Vagina (tissue), 2 donors: ENCODE measurements at regions of chr17 and their contacts with region 1.

Region 1: DNA sequence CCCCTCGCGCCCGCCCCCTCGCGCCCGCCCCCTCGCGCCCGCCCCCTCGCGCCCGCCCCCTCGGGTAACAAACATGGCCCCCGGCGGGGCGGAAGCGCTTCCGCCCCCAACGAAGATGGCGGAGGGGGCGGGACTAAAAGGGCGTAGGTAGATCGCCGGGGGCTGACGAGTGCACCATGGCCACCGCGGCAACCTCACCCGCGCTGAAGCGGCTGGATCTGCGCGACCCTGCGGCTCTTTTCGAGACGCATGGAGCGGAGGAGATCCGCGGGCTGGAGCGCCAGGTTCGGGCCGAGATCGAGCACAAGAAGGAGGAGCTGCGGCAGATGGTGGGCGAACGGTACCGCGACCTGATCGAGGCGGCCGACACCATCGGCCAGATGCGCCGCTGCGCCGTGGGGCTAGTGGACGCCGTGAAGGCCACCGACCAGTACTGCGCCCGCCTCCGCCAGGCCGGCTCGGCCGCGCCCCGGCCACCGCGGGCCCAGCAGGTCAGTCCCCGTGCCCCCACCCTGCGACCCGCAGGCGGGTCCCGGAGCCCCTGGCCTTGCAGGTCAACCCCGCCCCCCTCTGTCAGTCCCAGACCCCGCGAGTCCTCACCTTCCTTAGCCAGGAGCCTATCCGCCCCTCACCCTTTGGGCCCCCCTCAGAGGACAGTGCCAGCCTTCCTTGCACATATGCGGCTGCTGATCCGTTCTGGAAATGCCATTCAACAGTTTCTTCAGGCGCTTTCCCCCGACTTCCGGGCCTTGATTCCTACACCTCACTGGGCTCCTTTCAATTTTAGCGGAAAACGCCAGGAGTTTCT is at the start of gene COG1:
- DNase-seq: no peak
- H3K4me3 ChIP-seq: peak within 1 kb of the TSS; percentile 90 to 96
- H3K27ac ChIP-seq: peak within 1 kb of the TSS; percentile 88
- H3K4me1 ChIP-seq: peaks cover 19% of the 10 kb centered on the region
- H3K27me3 ChIP-seq: no peaks in the 10 kb centered on the region
- CTCF ChIP-seq: no peak
- POLR2A ChIP-seq: peak in 1 of 2 donors; percentile 27
- total RNA-seq, gene COG1: 30.9 TPM

Region 2: DNA sequence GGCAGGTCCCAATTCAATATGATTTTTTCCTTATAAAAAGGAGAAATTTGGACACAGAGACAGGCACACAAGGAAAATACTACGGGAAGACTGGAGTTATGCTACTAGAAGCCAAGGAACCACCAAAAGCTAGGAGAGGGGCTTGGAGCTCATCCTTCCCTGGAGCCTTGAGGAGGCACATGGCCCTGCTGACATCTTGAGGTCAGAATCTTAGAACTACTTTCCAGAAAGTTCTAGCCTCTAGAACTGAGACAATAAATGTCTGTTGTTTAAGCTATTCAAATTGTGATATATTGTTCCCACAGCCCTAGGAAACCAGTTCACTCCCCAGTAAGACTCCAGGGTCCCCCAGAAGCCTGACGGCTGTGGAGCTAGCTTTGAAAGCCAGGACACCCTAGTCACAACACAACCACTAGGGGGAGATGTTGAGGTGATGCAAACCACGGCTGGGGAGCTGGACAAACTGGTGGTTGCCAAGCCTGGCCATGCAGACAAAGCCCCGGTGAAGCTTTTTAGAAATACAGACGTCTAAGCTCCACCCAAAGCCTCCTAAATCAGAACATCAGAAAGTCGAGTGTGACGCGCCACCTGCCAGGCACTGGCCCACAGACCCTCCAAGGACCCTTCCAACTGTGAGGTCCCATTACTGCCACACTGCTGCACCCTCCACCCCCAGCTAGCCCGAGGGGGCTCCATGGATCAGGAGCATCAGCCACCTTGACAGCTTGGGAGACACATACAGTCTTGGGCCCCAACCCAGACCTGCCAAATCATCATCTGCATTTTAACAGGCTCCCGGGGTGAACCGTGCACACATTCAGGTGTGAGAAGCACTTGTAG is 207.0 kb before region 1 on chr17:
- intact Hi-C with region 1: loop called (anchors 1 kb)
- DNase-seq: no peak
- H3K4me3 ChIP-seq: no peak overlapping the region
- H3K27ac ChIP-seq: no peak overlapping the region
- H3K4me1 ChIP-seq: no peaks in the 10 kb centered on the region
- H3K27me3 ChIP-seq: no peaks in the 10 kb centered on the region
- CTCF ChIP-seq: peak; percentile 59 to 63 (median 60)
- POLR2A ChIP-seq: no peak

Region 3: GRCh38 chr17:73231841-73232586 is 38.9 kb after region 1 on chr17:
- intact Hi-C with region 1: loop called (anchors 5 kb)
- DNase-seq: peak in 1 of 2 donors; percentile 92
- H3K4me3 ChIP-seq: peak overlapping the region; percentile 64 to 100
- H3K27ac ChIP-seq: peak overlapping the region; percentile 90
- H3K4me1 ChIP-seq: peaks cover 56% of the 10 kb centered on the region
- H3K27me3 ChIP-seq: no peaks in the 10 kb centered on the region
- CTCF ChIP-seq: peak in 1 of 3 experiments; percentile 31
- POLR2A ChIP-seq: peak; percentile 8 to 54

Region 4: DNA sequence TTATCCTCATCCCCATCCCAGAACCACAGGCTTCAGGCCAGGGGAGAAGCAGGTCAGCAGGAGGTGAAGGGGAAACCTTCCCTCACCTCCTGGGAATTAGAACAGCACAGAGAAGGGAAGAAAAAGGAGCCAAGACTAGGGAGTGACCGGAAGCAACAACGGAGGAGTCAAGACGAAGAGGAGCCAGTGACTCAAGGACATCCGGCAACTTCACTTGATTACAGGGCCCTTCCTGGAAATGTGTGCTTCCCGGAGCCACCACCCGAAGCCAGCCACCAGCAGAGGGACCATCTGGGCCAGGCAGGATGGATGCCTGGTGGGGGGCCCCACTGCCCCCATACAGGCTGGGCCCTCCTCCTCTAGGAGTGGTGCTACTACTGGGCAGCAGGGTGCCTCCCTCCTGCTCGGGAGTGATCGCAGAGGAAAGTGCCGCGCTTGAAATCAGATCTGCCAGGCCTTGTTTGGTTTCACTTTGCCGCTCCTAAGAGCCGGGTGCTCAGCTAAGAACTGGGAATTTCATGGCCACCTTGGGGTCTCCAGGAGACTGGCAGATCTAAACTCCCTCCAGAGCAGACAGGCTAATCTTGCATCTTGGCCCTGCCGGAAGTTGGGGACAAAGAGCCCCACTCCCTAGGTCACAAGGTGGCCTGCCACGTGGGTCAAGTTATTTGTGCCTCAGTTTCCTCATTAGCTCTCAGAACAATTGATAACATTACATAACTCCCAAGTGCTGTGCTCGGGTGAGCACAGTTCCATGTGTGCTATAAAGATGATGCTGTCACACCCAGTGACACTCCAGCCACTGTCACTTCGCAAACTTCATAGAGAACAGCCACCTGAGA is 112.1 kb after region 1 on chr17:
- intact Hi-C with region 1: loop called (anchors 10 kb)
- DNase-seq: peak in 1 of 2 donors; percentile 87
- H3K4me3 ChIP-seq: peak overlapping the region; percentile 35 to 65
- H3K27ac ChIP-seq: peak overlapping the region; percentile 100
- H3K4me1 ChIP-seq: peaks cover 99% of the 10 kb centered on the region
- H3K27me3 ChIP-seq: no peaks in the 10 kb centered on the region
- CTCF ChIP-seq: peak in 1 of 3 experiments; percentile 11
- POLR2A ChIP-seq: no peak